Activated T-helper 1 cell treated with anti-CD3 and anti-CD28 coated beads, Interleukin-12 subunit alpha, Interleukin-12 subunit beta, Interleukin-2, Interleukin-4 antibody, amounts not matched to agents 30 ng/mL and 10 ng/mL and 1 ng/mL, durations not matched to agents 14 hours and 24 hours and 36 hours (primary cell): ENCODE measurements at regions of chr6 and their contacts with region 1.

Region 1: GRCh38 chr6:138987640-138988468 is at the start of gene REPS1:
- DNase-seq: peak; percentile 88
- H3K4me3 Mint-ChIP-seq: peak within 1 kb of the TSS; percentile 89
- H3K27ac Mint-ChIP-seq: peak within 1 kb of the TSS; percentile 92
- H3K4me1 Mint-ChIP-seq: peaks cover 7% of the 10 kb centered on the region
- H3K27me3 Mint-ChIP-seq: no peaks in the 10 kb centered on the region
- total RNA-seq, gene REPS1: 69.6 and 74.6 TPM in 2 replicates

Region 2: GRCh38 chr6:138773177-138774091 is 214.4 kb before region 1 on chr6 and contains the start of gene CCDC28A:
- intact Hi-C with region 1: loop called (anchors 1 kb)
- DNase-seq: peak; percentile 89
- H3K4me3 Mint-ChIP-seq: peak within 1 kb of the TSS; percentile 99
- H3K27ac Mint-ChIP-seq: peak within 1 kb of the TSS; percentile 100
- H3K4me1 Mint-ChIP-seq: peaks cover 23% of the 10 kb centered on the region
- H3K27me3 Mint-ChIP-seq: no peaks in the 10 kb centered on the region
- total RNA-seq, gene CCDC28A: 16.1 and 17.9 TPM in 2 replicates

Region 3: DNA sequence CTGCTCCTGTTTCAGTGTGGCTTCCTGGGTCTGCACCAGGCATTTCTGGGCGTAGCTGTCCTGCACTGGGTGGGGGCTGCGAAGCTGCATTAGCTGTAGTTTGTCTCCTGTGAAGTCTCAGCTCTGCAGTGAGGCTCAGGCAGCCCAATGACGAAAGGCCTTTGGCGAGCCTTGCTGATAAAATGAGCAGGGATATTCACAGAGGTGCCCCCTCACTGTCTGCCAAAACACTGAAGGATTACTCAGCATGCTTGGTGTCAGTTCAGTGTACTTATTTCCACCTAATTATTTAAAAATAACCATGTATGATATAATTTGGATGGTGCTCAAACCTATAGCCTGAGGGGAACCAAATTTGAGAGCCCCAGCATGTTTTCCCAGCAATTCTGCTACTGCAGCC is 118.5 kb before region 1 on chr6:
- intact Hi-C with region 1: no loop called
- DNase-seq: no peak
- H3K4me3 Mint-ChIP-seq: no peak overlapping the region
- H3K27ac Mint-ChIP-seq: no peak overlapping the region
- H3K4me1 Mint-ChIP-seq: peaks cover 5% of the 10 kb centered on the region
- H3K27me3 Mint-ChIP-seq: peaks cover 1% of the 10 kb centered on the region

Region 4: DNA sequence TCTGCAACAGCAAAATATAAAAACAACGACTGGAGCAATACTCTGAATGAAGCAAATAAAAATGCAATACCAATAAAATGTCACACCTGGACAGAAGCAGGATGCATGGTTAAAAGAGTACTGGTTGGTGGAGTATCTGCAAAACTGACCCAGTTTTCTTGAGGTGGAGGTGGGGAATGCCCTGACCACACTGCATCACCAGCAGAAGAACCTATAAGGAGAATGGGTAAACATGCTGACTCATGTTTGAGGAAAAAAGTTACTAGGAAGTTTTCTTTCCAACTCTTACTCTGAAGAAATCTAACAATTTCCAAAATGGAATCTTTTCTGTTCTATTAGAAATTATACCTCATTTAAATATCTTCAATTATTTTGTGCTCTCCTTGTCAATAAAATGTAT is 43.4 kb before region 1 on chr6:
- intact Hi-C with region 1: loop called (anchors 1 kb)
- DNase-seq: peak; percentile 21
- H3K4me3 Mint-ChIP-seq: peak overlapping the region; percentile 17
- H3K27ac Mint-ChIP-seq: peak overlapping the region; percentile 53
- H3K4me1 Mint-ChIP-seq: peaks cover 63% of the 10 kb centered on the region
- H3K27me3 Mint-ChIP-seq: no peaks in the 10 kb centered on the region

Region 5: DNA sequence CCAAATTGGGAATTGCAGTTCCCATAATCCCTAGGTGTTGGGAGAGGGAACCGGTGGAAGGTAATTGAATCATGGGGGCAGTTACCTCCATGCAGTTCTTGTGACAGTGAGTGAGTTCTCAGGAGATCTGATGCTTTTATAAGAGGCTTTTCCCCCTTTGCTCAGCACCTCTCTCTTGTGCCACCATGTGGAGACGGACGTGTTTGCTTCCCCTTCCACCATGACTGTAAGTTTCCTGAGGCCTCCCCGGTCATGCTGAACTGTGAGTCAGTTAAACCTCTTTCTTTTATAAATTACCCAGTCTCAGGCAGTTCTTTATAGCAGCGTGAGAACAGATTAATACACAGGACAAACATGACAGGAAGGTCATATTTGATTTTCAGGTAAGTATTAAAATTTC is 121.7 kb after region 1 on chr6:
- intact Hi-C with region 1: loop called (anchors 5 kb)
- DNase-seq: no peak
- H3K4me3 Mint-ChIP-seq: no peak overlapping the region
- H3K27ac Mint-ChIP-seq: no peak overlapping the region
- H3K4me1 Mint-ChIP-seq: peaks cover 22% of the 10 kb centered on the region
- H3K27me3 Mint-ChIP-seq: no peaks in the 10 kb centered on the region

Region 6: GRCh38 chr6:139161817-139162284 is 174.0 kb after region 1 on chr6:
- intact Hi-C with region 1: loop called (anchors 5 kb)
- DNase-seq: peak; percentile 72
- H3K4me3 Mint-ChIP-seq: peak overlapping the region; percentile 68
- H3K27ac Mint-ChIP-seq: peak overlapping the region; percentile 97
- H3K4me1 Mint-ChIP-seq: peaks cover 71% of the 10 kb centered on the region
- H3K27me3 Mint-ChIP-seq: no peaks in the 10 kb centered on the region